Activated CD4-positive, alpha-beta T cell treated with anti-CD3 and anti-CD28 coated beads for 36 hours (primary cell): ENCODE measurements at regions of chr17 and their contacts with region 1.

Region 1: GRCh38 chr17:17041571-17042380 is 481 bp upstream of the MPRIP start:
- DNase-seq: peak; percentile 98
- ATAC-seq: peak; percentile 99
- H3K4me3 Mint-ChIP-seq: peak overlapping the region; percentile 69
- H3K27ac Mint-ChIP-seq: no peak overlapping the region
- H3K4me1 Mint-ChIP-seq: peaks cover 44% of the 10 kb centered on the region
- H3K27me3 Mint-ChIP-seq: no peaks in the 10 kb centered on the region

Region 2: DNA sequence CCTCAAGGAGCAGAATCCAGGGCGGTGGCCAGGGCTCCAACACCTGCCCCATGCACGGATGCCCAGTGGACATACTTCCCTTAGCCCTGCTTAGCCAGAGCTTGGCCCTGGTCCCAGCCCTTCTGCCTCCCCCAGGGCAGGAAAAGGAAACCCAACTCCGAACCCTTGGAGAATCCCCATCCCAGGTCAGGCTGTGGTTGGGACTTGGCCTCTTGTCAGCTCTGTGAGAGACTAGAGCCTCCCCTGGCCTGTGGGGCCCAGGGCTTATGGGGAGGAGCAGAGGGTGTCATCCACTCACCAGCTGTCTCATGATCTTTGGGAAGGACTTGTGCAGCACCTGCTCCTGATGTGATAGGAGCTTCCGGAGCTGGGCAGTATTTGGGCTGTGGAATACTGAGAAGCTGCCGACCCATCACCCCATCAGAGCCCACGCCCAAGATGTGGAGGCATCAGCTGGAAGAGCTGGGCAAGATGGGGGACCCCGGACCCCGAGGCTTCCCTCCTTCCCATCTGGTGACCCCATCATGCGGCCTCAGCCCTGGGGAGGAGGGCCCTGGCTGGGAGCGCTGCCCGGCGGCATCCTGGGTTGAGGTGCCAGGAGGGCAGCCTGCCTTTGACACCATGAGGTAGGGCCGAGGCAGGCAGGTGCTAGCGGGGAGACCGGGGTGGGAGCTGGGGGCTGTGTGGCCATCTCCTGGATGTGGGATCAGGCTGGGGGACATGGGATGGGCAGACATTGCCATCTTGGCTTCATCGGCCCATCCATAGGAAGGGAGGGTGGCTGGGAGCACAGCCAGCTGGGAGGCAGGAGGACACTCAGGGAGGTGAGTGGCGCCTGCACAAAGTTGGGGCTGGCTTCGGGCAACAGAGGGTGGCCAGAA is 115.0 kb before region 1 on chr17:
- CTCF ChIA-PET with region 1: no interaction called
- POLR2A ChIA-PET with region 1: no interaction called
- intact Hi-C with region 1: no loop called
- DNase-seq: no peak
- ATAC-seq: no peak
- H3K4me3 Mint-ChIP-seq: no peak overlapping the region
- H3K27ac Mint-ChIP-seq: no peak overlapping the region
- H3K4me1 Mint-ChIP-seq: peaks cover 5% of the 10 kb centered on the region
- H3K27me3 Mint-ChIP-seq: no peaks in the 10 kb centered on the region

Region 3: GRCh38 chr17:17001874-17002520 is 39.8 kb before region 1 on chr17:
- CTCF ChIA-PET with region 1: interaction called, 4 read pairs
- POLR2A ChIA-PET with region 1: no interaction called
- intact Hi-C with region 1: loop called in 1 of 2 experiments (anchors 2 kb)
- DNase-seq: peak; percentile 88
- ATAC-seq: peak; percentile 98
- H3K4me3 Mint-ChIP-seq: no peak overlapping the region
- H3K27ac Mint-ChIP-seq: no peak overlapping the region
- H3K4me1 Mint-ChIP-seq: no peaks in the 10 kb centered on the region
- H3K27me3 Mint-ChIP-seq: no peaks in the 10 kb centered on the region

Region 4: GRCh38 chr17:17119533-17119932 is 77.8 kb after region 1 on chr17:
- CTCF ChIA-PET with region 1: no interaction called
- POLR2A ChIA-PET with region 1: no interaction called
- intact Hi-C with region 1: loop called (anchors 1 kb)
- DNase-seq: peak; percentile 82
- ATAC-seq: peak; percentile 92
- H3K4me3 Mint-ChIP-seq: no peak overlapping the region
- H3K27ac Mint-ChIP-seq: peak overlapping the region; percentile 87
- H3K4me1 Mint-ChIP-seq: peaks cover 80% of the 10 kb centered on the region
- H3K27me3 Mint-ChIP-seq: no peaks in the 10 kb centered on the region

Region 5: DNA sequence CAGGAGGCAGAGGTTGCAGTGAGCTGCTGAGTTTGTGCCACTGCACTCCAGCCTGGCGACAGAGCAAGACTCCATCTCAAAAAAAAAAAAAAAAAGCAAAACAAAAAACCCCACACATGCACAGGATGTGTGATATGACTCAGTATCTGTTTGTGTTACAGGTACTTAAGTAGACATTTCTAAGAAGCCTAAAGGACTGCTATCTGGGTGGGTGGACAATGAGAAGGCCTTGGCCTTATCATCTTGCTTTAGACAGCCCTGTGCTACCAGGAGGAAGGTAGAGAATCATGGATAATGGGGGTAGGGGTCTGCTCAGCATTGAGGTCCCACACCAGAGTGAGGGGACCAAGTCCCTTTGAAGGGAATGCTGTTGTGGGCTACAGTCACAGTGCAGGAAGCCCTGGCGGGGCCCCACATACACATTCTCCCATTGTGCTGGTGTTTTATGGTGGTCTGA is 137.6 kb after region 1 on chr17:
- CTCF ChIA-PET with region 1: no interaction called
- POLR2A ChIA-PET with region 1: no interaction called
- intact Hi-C with region 1: loop called in 1 of 2 experiments (anchors 1 kb)
- DNase-seq: peak; percentile 35
- ATAC-seq: peak; percentile 65
- H3K4me3 Mint-ChIP-seq: peak overlapping the region; percentile 51
- H3K27ac Mint-ChIP-seq: peak overlapping the region; percentile 97
- H3K4me1 Mint-ChIP-seq: peaks cover 93% of the 10 kb centered on the region
- H3K27me3 Mint-ChIP-seq: no peaks in the 10 kb centered on the region

Region 6: GRCh38 chr17:17280613-17281549 is 239.1 kb after region 1 on chr17 and contains the start of gene COPS3:
- CTCF ChIA-PET with region 1: no interaction called
- POLR2A ChIA-PET with region 1: interaction called, 3 read pairs
- intact Hi-C with region 1: loop called in 1 of 2 experiments (anchors 1 kb)
- DNase-seq: peak; percentile 99
- ATAC-seq: peak; percentile 94
- H3K4me3 Mint-ChIP-seq: peak within 1 kb of the TSS; percentile 92
- H3K27ac Mint-ChIP-seq: peak within 1 kb of the TSS; percentile 95
- H3K4me1 Mint-ChIP-seq: peaks cover 41% of the 10 kb centered on the region
- H3K27me3 Mint-ChIP-seq: no peaks in the 10 kb centered on the region
- total RNA-seq, gene COPS3: 79.6 to 83.1 TPM

Region 7: GRCh38 chr17:17303010-17303846 is 261.5 kb after region 1 on chr17 and contains the start of gene NT5M:
- CTCF ChIA-PET with region 1: no interaction called
- POLR2A ChIA-PET with region 1: no interaction called
- intact Hi-C with region 1: loop called in 1 of 2 experiments (anchors 1 kb)
- DNase-seq: peak; percentile 84
- ATAC-seq: peak; percentile 58
- H3K4me3 Mint-ChIP-seq: peak within 1 kb of the TSS; percentile 71
- H3K27ac Mint-ChIP-seq: peak within 1 kb of the TSS; percentile 87
- H3K4me1 Mint-ChIP-seq: peaks cover 28% of the 10 kb centered on the region
- H3K27me3 Mint-ChIP-seq: no peaks in the 10 kb centered on the region
- total RNA-seq, gene NT5M: 4.3 to 5.4 TPM

Region 8: DNA sequence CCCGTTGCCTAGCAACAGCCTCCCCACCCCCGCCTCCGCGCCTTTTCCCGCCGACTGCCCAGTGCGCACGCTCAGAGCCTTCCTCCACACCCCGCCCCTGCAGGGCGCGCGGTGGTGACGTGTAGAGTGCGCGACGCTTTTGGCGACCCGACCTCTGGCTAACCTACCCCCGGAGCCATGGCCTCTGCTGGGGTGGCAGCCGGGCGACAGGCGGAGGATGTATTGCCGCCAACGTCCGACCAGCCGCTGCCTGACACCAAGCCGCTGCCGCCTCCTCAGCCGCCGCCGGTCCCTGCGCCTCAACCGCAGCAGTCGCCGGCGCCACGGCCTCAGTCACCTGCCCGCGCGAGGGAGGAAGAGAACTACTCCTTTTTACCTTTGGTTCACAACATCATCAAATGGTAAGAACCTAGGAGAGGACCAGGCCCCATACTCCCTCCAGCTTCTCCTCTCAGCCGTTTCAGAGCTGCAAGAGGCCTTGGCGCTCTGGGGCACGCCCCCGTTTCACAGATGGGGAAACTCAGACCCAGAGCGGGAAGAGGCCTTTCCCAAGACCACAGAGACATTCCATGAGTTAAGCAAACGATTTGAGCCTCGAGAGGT is 435.2 kb after region 1 on chr17 and contains the start of gene MED9:
- CTCF ChIA-PET with region 1: no interaction called
- POLR2A ChIA-PET with region 1: no interaction called
- intact Hi-C with region 1: loop called in 1 of 2 experiments (anchors 10 kb)
- DNase-seq: peak; percentile 97
- ATAC-seq: peak; percentile 94
- H3K4me3 Mint-ChIP-seq: peak within 1 kb of the TSS; percentile 94
- H3K27ac Mint-ChIP-seq: peak within 1 kb of the TSS; percentile 84
- H3K4me1 Mint-ChIP-seq: peaks cover 44% of the 10 kb centered on the region
- H3K27me3 Mint-ChIP-seq: no peaks in the 10 kb centered on the region
- total RNA-seq, gene MED9: 12.2 to 14.3 TPM